ENCODE measurements at regions of chr5 and their contacts with region 1.

Region 1: GRCh38 chr5:140710899-140711552 is 10.8 kb downstream of the ZMAT2 start:
- DNase-seq: peak; percentile 40 to 96 (median 67)

Region 2: DNA sequence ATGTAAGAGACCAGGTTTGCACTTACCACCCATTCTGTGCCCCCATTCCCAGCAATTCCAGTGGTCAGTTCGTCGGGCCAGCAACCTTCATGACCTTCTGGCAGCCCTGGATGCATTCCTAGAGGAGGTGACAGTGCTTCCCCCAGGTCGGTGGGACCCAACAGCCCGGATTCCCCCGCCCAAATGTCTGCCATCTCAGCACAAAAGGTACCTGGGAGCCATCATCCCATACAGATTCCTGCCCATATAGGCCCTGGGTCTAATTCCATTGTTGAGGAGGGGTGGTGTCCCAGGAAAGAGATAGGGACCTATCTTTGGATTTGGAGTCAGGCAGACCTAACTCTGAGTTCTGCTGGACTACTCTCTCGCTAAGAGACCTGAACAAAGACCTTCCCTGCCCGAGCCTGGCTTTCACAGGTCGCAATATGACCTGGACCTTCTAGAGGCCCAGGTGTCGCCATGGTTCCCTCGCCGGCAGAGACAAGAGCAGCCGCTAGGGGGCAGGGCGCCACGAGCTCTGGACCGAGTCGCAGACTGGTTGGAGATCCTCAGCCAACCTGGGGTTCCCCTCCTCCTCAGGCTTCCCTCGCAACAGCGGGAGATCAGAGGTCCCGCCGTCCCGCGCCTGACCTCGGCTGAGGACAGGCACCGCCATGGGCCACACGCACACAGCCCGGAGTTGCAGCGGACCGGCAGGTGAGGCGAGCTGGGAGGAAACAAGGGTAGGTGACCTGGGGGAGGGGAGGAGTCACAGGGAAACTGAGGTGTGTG is 348.0 kb before region 1 on chr5:
- intact Hi-C with region 1: loop called (anchors 10 kb)
- DNase-seq: peak; percentile 63 to 96 (median 82)